Activated T-helper 1 cell treated with anti-CD3 and anti-CD28 coated beads, Interleukin-12 subunit alpha, Interleukin-12 subunit beta, Interleukin-2, Interleukin-4 antibody, amounts not matched to agents 30 ng/mL and 10 ng/mL and 1 ng/mL, durations not matched to agents 14 hours and 24 hours and 36 hours (primary cell): ENCODE measurements at regions of chr12 and their contacts with region 1.

Region 1: GRCh38 chr12:113358381-113359132 is at the start of gene PLBD2:
- DNase-seq: peak; percentile 89
- H3K4me3 Mint-ChIP-seq: peak within 1 kb of the TSS; percentile 89
- H3K27ac Mint-ChIP-seq: peak within 1 kb of the TSS; percentile 69
- H3K4me1 Mint-ChIP-seq: peaks cover 13% of the 10 kb centered on the region
- H3K27me3 Mint-ChIP-seq: peaks cover 4% of the 10 kb centered on the region
- total RNA-seq, gene PLBD2: 15.3 and 16.3 TPM in 2 replicates

Region 2: DNA sequence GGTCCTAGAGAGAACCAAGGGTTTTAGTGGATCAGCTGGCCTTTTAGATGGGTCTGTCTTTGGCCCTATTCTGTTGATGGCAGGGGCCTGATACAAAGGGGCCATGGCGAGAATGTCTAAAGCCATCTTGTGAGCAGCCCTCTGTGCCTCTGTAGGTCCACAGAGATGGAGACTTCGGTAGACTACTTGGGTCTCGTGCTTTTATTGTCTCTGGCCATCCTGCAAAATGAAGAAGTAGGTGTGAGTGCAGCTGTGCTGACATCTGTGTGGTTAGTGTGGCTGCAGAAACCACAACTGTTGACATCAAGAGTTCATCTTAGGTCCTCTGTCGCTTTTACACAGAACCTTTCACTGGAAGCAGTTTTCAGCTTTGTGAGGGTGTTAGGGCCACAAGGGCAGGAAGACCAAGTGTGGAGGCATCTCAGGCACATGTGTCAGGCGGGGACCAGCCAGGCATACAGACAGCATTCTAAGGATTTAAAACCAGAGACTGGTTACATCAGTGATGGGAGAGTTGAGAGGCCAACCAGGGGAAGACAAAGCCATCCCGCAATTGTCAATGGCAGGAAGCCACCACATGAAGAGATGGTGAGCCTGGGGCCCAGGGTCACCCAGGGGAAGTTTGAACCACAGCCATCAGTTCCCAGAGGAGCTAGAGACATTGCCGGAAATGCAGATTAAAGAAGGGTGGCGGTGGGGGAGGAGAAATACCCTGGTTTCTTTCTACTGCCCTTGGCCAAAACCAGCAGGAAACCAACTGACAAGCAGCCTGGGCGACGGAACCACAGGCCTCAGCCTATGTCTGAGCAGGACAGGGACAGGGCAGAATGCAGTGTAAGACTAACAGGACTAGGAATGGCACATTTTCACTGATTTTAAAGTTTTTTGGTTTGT is 150.3 kb before region 1 on chr12:
- intact Hi-C with region 1: loop called (anchors 5 kb)
- DNase-seq: peak; percentile 72
- H3K4me3 Mint-ChIP-seq: peak overlapping the region; percentile 75
- H3K27ac Mint-ChIP-seq: peak overlapping the region; percentile 96
- H3K4me1 Mint-ChIP-seq: peaks cover 65% of the 10 kb centered on the region
- H3K27me3 Mint-ChIP-seq: no peaks in the 10 kb centered on the region

Region 3: DNA sequence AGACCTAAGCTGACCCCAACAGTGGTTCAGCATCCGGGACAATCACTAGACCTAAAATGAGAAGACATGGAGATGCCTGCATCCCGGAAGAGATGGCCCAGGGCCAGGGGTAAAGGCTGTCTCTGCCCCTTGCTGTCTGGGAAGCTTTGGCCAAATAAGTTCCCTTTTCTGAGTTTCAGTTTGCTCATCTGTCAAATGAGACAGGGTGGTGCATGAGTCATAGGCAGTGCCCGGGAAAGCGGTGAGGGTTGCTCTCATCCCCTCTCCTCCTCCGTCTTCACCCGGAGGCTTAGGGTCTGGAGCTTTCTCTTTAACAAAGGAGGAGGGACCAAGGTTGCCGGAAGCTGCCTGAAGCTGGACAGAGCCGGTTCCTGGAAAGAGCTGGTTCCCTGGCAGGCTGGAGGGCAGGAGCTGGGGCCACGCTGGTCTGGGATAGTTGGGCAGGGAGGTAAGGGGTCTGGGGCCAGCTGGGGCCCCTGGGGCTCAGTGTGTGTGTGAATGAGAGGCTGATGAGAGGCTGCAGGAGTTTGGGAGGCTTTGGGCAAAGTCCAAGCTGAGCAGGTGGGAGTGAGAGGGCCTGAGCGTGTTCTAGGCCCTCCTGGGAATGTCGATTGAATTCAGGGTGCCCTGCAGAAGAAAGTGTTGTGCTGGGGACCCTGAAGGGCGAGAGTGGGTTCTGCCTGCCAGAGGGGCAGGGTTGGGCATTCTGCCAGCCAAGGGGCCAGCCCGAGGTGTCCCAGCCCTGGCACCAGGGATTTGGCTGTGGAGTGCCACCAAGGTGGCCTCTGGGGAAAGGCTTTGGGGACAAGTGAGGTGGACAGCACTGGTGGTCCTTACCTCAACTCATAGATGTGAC is 63.7 kb after region 1 on chr12 and contains the start of gene SDSL:
- intact Hi-C with region 1: loop called (anchors 2 kb)
- DNase-seq: peak; percentile 17
- H3K4me3 Mint-ChIP-seq: peak within 1 kb of the TSS; percentile 81
- H3K27ac Mint-ChIP-seq: peak within 1 kb of the TSS; percentile 79
- H3K4me1 Mint-ChIP-seq: peaks cover 11% of the 10 kb centered on the region
- H3K27me3 Mint-ChIP-seq: peaks cover 4% of the 10 kb centered on the region
- total RNA-seq, gene SDSL: 0.52 and 0.54 TPM in 2 replicates